Common myeloid progenitor, CD34-positive (primary cell): ENCODE measurements at regions of chr2 and their contacts with region 1.

Region 1: DNA sequence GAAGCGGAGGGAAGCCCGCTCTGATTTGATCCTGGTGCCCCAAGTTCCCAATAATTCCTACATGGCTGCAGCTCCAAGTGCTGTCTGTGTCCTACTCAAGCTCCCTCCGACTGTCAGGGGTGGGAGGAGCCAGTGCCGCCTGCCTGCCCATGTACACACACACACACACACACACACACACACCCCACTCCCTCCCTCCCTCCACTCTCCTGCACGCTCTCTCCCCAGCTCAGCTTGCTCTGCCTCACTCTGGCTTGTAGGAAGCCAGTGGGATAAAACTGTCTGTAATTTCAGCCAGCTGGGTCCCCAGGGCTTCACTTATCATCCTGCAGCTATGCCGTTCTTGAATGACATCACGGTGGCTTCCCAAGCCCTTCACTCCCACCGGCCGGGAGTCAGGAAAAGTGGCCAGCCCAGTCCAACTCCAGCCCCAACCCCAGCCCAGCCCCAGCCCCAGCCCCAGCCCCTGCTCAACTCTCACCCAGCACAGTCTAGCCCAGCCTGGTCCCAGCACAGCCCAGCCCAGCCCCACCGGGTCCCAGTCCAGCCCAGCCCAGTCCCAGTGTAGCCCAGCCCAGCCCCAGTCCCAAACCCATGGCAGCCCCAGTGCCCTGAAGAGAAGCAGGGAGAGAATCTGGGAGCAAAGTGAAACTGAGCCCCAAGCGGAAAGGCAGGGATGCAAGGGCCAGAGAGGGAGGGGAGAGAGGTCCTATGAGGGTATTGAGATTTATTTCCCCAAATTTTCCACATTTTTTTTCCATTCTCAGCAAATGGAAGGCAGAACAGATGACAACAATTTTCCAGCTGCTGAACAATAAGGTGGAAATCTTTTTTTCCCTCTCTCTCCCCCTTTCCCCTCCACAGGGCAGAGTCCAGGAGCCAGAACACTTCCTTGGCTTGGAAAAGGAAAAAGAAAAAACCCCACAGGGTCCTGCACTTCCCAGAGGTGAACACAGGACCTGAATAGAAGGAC is 144.0 kb downstream of the TNS1 start:
- DNase-seq: peak in 2 of 3 donors; percentile 7
- H3K4me3 ChIP-seq: no peak overlapping the region
- H3K27ac ChIP-seq: no peak overlapping the region
- H3K4me1 ChIP-seq: no peaks in the 10 kb centered on the region
- H3K27me3 ChIP-seq: no peaks in the 10 kb centered on the region

Region 2: DNA sequence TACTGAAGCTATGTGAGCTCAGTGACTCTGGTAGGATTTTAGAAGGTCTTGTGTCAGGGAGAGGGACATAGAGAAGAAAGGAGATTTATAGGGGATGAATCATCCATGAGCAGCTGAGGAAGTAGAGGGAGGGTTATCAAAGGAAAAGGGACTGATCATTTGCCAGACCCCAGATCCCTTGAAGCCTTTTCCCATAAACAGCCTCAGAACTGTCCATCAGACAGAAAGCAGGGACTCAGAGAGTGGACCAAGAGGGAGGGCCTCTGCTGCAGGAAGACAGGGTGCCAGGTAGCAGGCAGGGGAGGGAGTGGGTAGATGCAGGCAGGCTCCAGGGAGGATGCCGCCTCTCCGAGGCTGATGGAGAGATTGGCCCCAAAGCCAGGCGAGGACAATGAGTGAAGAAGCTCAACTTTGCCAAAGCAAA is 10.1 kb after region 1 on chr2:
- CTCF ChIA-PET with region 1: interaction called, 11 read pairs
- POLR2A ChIA-PET with region 1: no interaction called
- DNase-seq: no peak
- H3K4me3 ChIP-seq: no peak overlapping the region
- H3K27ac ChIP-seq: no peak overlapping the region
- H3K4me1 ChIP-seq: peaks cover 0 to 3% (median 0%) of the 10 kb centered on the region in 4 experiments
- H3K27me3 ChIP-seq: no peaks in the 10 kb centered on the region